Dorsolateral prefrontal cortex (tissue), 120 donors: ENCODE measurements at regions of chr5 and their contacts with region 1.

Region 1: DNA sequence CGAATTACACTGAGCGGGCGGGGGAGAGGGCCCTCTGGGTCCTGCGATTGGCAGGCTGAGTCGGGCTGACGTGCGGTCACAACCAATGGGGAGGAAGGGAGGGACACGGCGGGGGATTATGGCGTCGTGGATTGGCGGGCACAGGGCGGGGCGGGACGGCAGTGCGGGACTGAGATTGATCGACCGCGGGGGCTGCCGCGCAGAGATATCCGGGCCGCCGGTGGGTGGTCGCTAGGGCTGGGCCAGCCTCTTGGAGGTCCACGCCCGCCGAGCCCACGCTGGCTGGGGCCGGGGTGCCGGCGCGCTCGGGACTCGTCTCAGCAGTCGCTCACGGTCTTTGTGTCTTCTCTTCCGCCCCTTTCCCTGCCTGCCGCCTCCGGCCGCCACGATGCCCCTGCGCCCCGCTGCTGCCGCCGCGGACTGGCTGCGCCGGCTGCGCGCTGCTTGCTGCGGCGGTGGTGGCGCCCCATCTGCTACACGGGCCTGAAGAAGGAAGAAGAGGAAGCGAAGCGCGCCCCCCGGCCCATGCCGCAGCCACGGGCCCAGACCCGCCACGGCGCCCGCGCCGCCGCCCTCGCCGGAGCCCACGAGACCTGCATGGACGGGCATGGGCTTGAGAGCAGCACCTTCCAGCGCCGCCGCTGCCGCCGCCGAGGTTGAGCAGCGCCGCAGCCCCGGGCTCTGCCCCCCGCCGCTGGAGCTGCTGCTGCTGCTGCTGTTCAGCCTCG is at the start of gene RGMB:
- DNase-seq: peak; percentile 95 to 99 (median 98)
- H3K4me3 ChIP-seq: peak within 1 kb of the TSS; percentile 56 to 98 (median 86)
- H3K27ac ChIP-seq: peak within 1 kb of the TSS in 58 of 59 donors; percentile 39 to 95 (median 86)
- H3K27me3 ChIP-seq: no peaks in the 10 kb centered on the region
- CTCF ChIP-seq: peak in 26 of 56 donors; percentile 2 to 55 (median 21)
- total RNA-seq, gene RGMB: 20.2 to 59.3 (median 41.0) TPM

Region 2: DNA sequence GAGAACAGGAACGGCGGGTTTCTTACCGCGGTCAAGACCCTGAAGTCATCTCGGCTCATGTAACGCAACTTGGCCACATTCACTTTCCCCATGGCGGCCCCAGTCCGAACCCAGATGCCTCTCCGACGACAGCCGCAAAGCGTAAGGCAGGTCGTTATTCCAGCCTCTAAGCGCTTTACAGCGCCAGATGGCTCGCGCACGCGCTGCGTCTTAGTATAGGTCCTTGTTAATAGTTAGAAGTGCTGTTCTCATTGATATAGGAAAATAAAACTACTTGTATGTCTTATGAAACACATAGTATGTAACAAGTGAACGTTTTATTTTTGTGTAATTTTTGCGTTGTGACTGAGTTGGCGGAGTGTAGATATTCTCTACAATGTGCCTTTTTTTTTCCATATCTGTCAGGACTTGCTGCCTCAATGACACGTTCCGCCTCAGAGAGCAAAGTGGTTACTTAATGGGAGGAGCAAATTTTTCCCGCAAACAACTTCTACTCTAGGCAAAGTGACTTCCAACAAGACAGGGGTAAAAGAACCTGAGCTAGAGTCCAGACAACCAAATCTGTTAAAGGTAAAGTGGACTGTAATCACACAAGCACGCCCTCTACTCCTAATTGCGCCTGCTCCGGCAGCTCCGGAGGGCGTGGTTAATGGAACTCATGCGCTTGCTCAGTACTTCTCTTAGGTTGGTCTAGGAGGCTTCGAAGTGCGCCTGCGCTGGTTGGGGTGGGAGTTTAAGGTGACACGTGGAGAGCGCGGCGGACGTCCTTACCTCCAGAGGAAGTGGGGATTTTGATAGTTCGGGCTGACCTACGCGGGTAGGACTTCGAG is 1590.3 kb before region 1 on chr5 and contains the start of gene RIOK2:
- intact Hi-C with region 1: loop called in 1 of 2 experiments (anchors 5 kb)
- DNase-seq: peak; percentile 88 to 98 (median 93)
- H3K4me3 ChIP-seq: peak within 1 kb of the TSS; percentile 61 to 98 (median 87)
- H3K27ac ChIP-seq: peak within 1 kb of the TSS; percentile 24 to 99 (median 93)
- H3K27me3 ChIP-seq: no peaks in the 10 kb centered on the region
- CTCF ChIP-seq: peak in 30 of 56 donors; percentile 5 to 51 (median 18)
- total RNA-seq, gene RIOK2: 9.8 to 40.5 (median 21.9) TPM

Region 3: DNA sequence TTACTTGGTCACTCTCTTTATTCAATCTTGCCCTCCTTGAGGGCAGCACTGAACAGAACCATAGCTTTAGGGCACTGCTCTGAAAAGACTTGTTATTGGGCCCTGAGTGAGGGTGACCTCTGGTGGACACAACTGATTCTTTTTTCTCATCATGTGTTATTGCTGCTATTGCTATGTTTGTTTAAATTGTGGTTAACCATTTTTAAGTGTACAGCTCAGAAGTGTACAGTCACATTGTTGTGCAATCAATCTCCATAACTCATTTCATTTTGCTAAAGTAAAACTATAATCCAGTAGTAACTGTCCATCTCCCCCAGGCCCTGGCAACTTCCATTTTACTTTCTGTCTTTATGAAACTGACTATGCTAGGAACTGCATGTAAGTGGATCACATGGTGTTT is 1239.5 kb before region 1 on chr5:
- intact Hi-C with region 1: loop called in 1 of 2 experiments (anchors 10 kb)
- DNase-seq: no peak
- H3K4me3 ChIP-seq: no peak overlapping the region
- H3K27ac ChIP-seq: no peak overlapping the region
- H3K27me3 ChIP-seq: no peaks in the 10 kb centered on the region
- CTCF ChIP-seq: peak in 55 of 56 donors; percentile 26 to 79 (median 62)

Region 4: DNA sequence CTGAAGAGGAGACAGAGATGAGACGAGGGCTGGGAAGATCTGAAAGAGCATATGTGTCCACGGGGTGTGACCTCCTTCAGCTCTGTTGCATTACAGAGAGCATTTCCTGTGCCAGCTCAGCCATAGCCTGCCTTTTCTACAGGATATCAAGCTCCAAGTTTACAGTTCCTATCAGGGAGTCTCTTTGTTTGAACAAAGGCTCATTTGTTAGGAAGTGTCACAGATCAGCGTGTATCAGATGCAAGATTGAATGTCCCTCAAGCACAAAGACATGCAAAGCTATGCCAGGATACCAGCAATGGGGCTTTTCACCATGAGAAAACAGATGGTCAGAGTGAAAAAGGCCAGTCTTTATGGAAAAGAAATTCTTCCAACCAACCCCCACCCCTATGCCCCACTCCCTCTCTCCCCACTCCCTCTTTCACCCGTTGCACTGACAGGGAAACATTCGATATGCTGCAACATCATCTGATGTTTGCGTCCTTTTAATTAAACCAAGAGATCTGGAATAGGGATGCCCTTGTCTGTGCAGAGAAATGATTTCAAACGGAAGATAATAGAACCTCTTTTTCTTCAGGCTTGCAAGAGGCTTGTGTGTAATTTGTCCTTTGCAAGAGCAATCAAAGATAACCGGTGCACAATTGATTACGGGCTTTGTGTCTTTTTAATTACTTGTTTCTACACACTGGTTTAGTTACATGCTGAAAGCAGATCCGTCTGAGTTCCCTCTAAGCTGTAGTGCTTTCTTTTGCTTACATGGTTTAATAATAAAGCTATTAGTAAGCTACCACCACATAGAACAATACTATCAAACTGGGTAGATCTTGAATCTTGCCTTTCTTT is 263.3 kb before region 1 on chr5:
- intact Hi-C with region 1: loop called in 1 of 2 experiments (anchors 5 kb)
- DNase-seq: peak in 2 of 10 donors; percentile 2 to 13
- H3K4me3 ChIP-seq: peak overlapping the region in 20 of 59 donors; percentile 0 to 47 (median 20)
- H3K27ac ChIP-seq: peak overlapping the region in 33 of 59 donors; percentile 2 to 76 (median 47)
- H3K27me3 ChIP-seq: no peaks in the 10 kb centered on the region
- CTCF ChIP-seq: no peak

Region 5: GRCh38 chr5:98940581-98940980 is 167.0 kb after region 1 on chr5:
- intact Hi-C with region 1: no loop called
- DNase-seq: peak in 1 of 10 donors; percentile 7
- H3K4me3 ChIP-seq: peak overlapping the region in 1 of 59 donors; percentile 1
- H3K27ac ChIP-seq: peak overlapping the region in 6 of 59 donors; percentile 1 to 35 (median 15)
- H3K27me3 ChIP-seq: no peaks in the 10 kb centered on the region
- CTCF ChIP-seq: no peak